CD4-positive, alpha-beta T cell (primary cell): ENCODE measurements at regions of chr20 and their contacts with region 1.

Region 1: GRCh38 chr20:2084703-2085102 is 16.9 kb upstream of the STK35 start:
- DNase-seq: peak in 2 of 14 experiments; percentile 23 to 49
- ATAC-seq: no peak
- H3K4me3 ChIP-seq: no peak overlapping the region
- H3K4me3 Mint-ChIP-seq: no peak overlapping the region
- H3K27ac ChIP-seq: no peak overlapping the region
- H3K27ac Mint-ChIP-seq: no peak overlapping the region
- H3K4me1 ChIP-seq: no peaks in the 10 kb centered on the region
- H3K4me1 Mint-ChIP-seq: no peaks in the 10 kb centered on the region
- H3K27me3 ChIP-seq: peaks cover 15 to 19% of the 10 kb centered on the region in 2 experiments
- H3K27me3 Mint-ChIP-seq: peaks cover 65% of the 10 kb centered on the region
- CTCF ChIP-seq: no peak

Region 2: DNA sequence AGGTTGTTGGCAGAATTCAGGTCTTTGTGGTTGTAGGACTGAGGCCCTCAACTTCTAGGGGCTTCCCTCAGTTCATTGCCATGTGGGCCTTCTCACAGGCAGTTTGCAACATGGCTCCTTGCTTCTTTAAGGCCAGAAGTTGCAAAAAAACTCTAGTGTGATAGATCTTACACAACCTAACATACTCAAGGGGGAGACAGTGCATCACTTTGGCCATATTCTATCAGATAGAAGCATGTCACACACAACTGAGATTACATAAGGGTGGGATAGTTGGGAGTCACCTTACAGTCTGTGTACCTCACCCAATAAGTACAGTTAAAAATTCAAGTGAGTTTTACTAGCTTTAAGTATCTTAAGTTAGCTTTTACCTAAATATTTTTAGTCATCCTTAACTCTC is 528.8 kb before region 1 on chr20:
- CTCF ChIA-PET with region 1: no interaction called
- POLR2A ChIA-PET with region 1: no interaction called
- intact Hi-C with region 1: no loop called
- DNase-seq: peak in 4 of 14 experiments; percentile 12 to 62 (median 48)
- ATAC-seq: peak; percentile 58
- H3K4me3 ChIP-seq: no peak overlapping the region
- H3K4me3 Mint-ChIP-seq: no peak overlapping the region
- H3K27ac ChIP-seq: no peak overlapping the region
- H3K27ac Mint-ChIP-seq: no peak overlapping the region
- H3K4me1 ChIP-seq: no peaks in the 10 kb centered on the region
- H3K4me1 Mint-ChIP-seq: peaks cover 8% of the 10 kb centered on the region
- H3K27me3 ChIP-seq: no peaks in the 10 kb centered on the region
- H3K27me3 Mint-ChIP-seq: no peaks in the 10 kb centered on the region
- CTCF ChIP-seq: peak; percentile 48

Region 3: GRCh38 chr20:2026514-2026913 is 58.2 kb before region 1 on chr20:
- CTCF ChIA-PET with region 1: no interaction called
- POLR2A ChIA-PET with region 1: no interaction called
- intact Hi-C with region 1: loop called in 1 of 2 experiments (anchors 5 kb)
- DNase-seq: no peak
- ATAC-seq: no peak
- H3K4me3 ChIP-seq: no peak overlapping the region
- H3K4me3 Mint-ChIP-seq: no peak overlapping the region
- H3K27ac ChIP-seq: no peak overlapping the region
- H3K27ac Mint-ChIP-seq: no peak overlapping the region
- H3K4me1 ChIP-seq: no peaks in the 10 kb centered on the region
- H3K4me1 Mint-ChIP-seq: no peaks in the 10 kb centered on the region
- H3K27me3 ChIP-seq: peaks cover 0 to 9% of the 10 kb centered on the region in 2 experiments
- H3K27me3 Mint-ChIP-seq: peaks cover 68% of the 10 kb centered on the region
- CTCF ChIP-seq: no peak

Region 4: GRCh38 chr20:2042400-2042799 is 42.3 kb before region 1 on chr20:
- CTCF ChIA-PET with region 1: no interaction called
- POLR2A ChIA-PET with region 1: no interaction called
- intact Hi-C with region 1: no loop called
- DNase-seq: no peak
- ATAC-seq: no peak
- H3K4me3 ChIP-seq: no peak overlapping the region
- H3K4me3 Mint-ChIP-seq: no peak overlapping the region
- H3K27ac ChIP-seq: no peak overlapping the region
- H3K27ac Mint-ChIP-seq: no peak overlapping the region
- H3K4me1 ChIP-seq: no peaks in the 10 kb centered on the region
- H3K4me1 Mint-ChIP-seq: no peaks in the 10 kb centered on the region
- H3K27me3 ChIP-seq: peaks cover 11 to 14% of the 10 kb centered on the region in 2 experiments
- H3K27me3 Mint-ChIP-seq: peaks cover 38% of the 10 kb centered on the region
- CTCF ChIP-seq: no peak